ENCODE measurements at regions of chr2 and their contacts with region 1.

Region 1: GRCh38 chr2:237674731-237675276 is 47.4 kb downstream of the LRRFIP1 start:
- DNase-seq: peak; percentile 90
- H3K4me3 ChIP-seq: no peak overlapping the region; a peak in 1 of 4 replicates
- H3K27ac ChIP-seq: peak overlapping the region; percentile 76 to 92
- H3K4me1 ChIP-seq: peaks cover 35 to 51% of the 10 kb centered on the region in 2 experiments
- H3K27me3 ChIP-seq: no peaks in the 10 kb centered on the region
- CTCF ChIP-seq: no peak
- EP300 ChIP-seq: no peak
- RAD21 ChIP-seq: peak; percentile 36; the same call in 1 of the 2 replicates

Region 2: GRCh38 chr2:237529452-237530402 is 145.1 kb before region 1 on chr2:
- CTCF ChIA-PET with region 1: no interaction called
- POLR2A ChIA-PET with region 1: no interaction called
- DNase-seq: no peak
- H3K4me3 ChIP-seq: no peak overlapping the region
- H3K27ac ChIP-seq: no peak overlapping the region
- H3K4me1 ChIP-seq: peaks cover 0 to 8% of the 10 kb centered on the region in 2 experiments; a peak in 1 of 4 replicates
- H3K27me3 ChIP-seq: no peaks in the 10 kb centered on the region
- CTCF ChIP-seq: no peak
- EP300 ChIP-seq: no peak
- RAD21 ChIP-seq: no peak

Region 3: GRCh38 chr2:237581751-237582746 is 92.8 kb before region 1 on chr2:
- CTCF ChIA-PET with region 1: interaction called, 33 read pairs
- POLR2A ChIA-PET with region 1: no interaction called
- DNase-seq: peak; percentile 69
- H3K4me3 ChIP-seq: no peak overlapping the region
- H3K27ac ChIP-seq: peak overlapping the region in 1 of 2 experiments; percentile 77; a peak in 1 of 4 replicates
- H3K4me1 ChIP-seq: peaks cover 0 to 21% of the 10 kb centered on the region in 2 experiments; a peak in 1 of 4 replicates
- H3K27me3 ChIP-seq: no peaks in the 10 kb centered on the region
- CTCF ChIP-seq: peak; percentile 61
- EP300 ChIP-seq: no peak
- RAD21 ChIP-seq: peak; percentile 77

Region 4: DNA sequence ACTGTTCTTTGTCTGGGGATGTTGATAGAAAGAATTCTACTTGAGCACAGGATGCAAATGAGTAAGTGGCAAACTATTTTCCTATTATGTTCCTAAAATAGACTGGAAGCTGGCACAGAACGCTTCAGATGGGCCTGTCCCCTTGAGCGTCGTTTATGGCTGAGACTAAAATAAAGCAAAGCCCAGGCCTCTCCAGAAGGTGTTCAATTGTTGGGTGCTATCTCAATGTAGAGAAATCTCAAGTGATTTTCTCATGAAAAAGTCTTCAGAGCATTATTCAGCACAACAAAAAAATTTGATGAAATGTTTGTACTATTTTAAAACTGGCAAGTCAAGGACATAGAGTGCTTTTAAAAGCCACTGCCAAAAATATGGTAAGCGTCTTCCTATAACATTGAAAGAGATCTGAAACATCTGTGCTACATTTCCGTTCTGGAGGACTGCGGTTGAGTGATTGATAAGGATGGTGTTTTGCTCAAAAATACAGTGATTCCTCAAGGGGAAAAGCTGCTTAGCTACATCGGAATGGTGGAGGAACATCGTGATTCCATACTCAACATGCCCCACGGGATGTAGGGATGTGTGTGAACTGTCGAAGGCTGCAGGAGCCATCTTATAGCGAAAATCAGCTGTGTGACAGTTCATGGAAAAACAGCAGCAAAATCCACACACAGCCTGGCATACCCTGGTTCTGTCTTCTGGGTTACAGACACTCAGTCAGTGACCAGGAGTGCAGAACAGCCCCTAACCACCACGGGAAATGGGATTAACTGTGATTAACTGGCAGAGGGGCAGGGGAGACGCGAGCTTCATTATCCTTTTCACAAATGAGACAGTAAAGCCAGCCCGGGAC is 57.8 kb before region 1 on chr2:
- CTCF ChIA-PET with region 1: no interaction called
- POLR2A ChIA-PET with region 1: no interaction called
- DNase-seq: no peak
- H3K4me3 ChIP-seq: no peak overlapping the region
- H3K27ac ChIP-seq: peak overlapping the region; percentile 84 to 96
- H3K4me1 ChIP-seq: peaks cover 20 to 41% of the 10 kb centered on the region in 2 experiments
- H3K27me3 ChIP-seq: no peaks in the 10 kb centered on the region
- CTCF ChIP-seq: no peak
- EP300 ChIP-seq: peak; percentile 22 to 63; a peak in 3 of 4 replicates
- RAD21 ChIP-seq: no peak

Region 5: DNA sequence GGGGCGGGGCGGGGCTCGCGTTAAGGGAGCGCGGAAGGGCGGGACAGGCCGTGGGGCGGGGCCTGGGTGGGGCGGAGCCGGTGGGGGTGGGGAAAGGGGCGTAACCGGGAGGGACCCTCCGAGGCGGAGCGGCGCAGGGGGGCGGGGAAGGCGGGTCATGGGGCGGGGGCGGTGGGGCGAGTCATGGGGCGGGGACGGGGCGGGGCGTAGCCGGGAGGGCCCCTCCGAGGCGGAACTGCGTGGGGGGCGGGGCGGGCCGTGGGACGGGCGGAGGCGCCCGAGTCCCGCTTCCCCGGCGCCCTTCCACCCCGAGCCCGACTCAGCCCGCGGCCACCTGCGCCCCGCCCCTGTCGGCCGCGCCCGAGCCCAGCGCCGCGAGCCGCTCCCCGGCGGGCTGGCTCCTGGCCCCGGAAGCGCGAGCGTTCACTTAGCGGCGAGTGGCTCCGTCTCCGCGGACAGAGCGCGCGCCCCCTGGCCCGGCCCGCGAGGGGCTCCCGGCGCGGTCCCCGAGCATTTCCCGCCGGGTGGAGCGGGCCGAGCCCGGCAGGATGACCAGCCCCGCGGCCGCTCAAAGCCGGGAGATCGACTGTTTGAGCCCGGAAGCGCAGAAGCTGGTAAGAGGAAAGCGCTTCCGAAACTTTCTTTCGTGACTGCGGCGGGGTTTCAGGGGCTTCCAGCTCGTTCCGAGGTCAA is 17.2 kb after region 1 on chr2:
- CTCF ChIA-PET with region 1: interaction called, 150 read pairs
- POLR2A ChIA-PET with region 1: interaction called, 5 read pairs
- DNase-seq: peak; percentile 99
- H3K4me3 ChIP-seq: peak overlapping the region; percentile 82 to 84
- H3K27ac ChIP-seq: peak overlapping the region; percentile 60 to 88
- H3K4me1 ChIP-seq: peaks cover 50 to 53% of the 10 kb centered on the region in 2 experiments
- H3K27me3 ChIP-seq: no peaks in the 10 kb centered on the region
- CTCF ChIP-seq: no peak
- EP300 ChIP-seq: no peak
- RAD21 ChIP-seq: no peak

Region 6: DNA sequence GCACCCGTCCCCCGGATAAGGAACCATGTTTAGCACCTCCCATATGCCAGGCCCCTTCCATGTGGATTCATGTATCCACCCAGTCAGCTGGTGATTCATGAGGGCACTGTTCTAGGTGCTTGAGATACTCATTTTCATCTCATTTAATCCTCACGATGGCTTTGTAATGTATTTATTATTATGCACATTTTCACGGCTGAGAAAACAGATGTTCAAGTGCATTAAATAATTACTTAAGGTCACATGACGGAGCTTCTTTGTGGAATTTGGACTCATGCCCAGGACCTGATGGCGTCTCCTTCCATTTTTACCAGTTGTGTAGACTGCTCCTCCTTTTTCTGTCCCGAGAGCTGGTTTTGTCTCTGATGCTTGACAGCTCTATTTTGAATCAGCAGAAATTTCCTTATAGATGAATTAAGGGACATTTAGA is 51.6 kb after region 1 on chr2:
- CTCF ChIA-PET with region 1: interaction called, 45 read pairs
- POLR2A ChIA-PET with region 1: no interaction called
- DNase-seq: peak; percentile 65
- H3K4me3 ChIP-seq: no peak overlapping the region
- H3K27ac ChIP-seq: peak overlapping the region; percentile 63 to 65
- H3K4me1 ChIP-seq: peaks cover 41 to 50% of the 10 kb centered on the region in 2 experiments
- H3K27me3 ChIP-seq: no peaks in the 10 kb centered on the region
- CTCF ChIP-seq: no peak
- EP300 ChIP-seq: no peak; a peak in 2 of 4 replicates
- RAD21 ChIP-seq: no peak

Region 7: DNA sequence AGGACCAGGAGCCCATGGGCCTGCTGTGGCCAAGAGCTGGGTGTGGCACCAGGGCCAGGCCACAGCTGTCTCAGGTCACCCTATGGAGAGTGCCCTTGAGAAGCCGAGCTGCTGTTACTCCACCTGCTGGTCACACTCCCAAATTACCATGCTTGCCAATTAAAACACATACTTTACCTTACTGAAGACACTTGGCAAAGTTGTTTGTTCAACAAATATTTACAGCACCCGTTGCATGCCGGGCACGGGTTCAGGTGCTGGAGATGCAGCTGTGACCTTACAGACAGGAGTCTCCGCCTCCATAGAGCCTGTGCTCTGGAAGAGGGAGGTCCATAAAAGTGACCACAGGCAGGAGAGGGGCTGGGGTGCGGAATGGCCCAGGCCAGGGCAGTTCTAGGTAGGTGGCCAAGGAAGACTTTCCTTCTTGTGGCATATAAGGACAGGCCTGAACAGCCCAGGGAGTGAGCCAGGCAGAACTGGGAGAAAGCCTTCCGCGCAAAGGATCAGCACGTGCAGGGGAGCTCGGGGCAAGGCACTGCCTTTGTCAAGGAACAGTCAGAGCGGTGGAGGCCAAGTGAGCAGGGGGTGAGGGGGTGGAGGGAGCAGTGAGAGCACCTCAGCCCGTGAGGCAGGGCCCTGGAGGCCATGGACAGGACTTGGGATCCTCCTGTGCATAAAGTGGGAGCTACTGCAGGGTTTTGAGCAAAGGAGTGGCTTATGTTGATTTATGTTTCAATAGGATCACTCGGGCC is 100.2 kb after region 1 on chr2:
- CTCF ChIA-PET with region 1: interaction called, 46 read pairs
- POLR2A ChIA-PET with region 1: no interaction called
- DNase-seq: peak; percentile 75
- H3K4me3 ChIP-seq: no peak overlapping the region; a peak in 1 of 4 replicates
- H3K27ac ChIP-seq: no peak overlapping the region; a peak in 1 of 4 replicates
- H3K4me1 ChIP-seq: no peaks in the 10 kb centered on the region; a peak in 1 of 4 replicates
- H3K27me3 ChIP-seq: no peaks in the 10 kb centered on the region
- CTCF ChIP-seq: peak; percentile 70
- EP300 ChIP-seq: no peak
- RAD21 ChIP-seq: peak; percentile 67

Region 8: DNA sequence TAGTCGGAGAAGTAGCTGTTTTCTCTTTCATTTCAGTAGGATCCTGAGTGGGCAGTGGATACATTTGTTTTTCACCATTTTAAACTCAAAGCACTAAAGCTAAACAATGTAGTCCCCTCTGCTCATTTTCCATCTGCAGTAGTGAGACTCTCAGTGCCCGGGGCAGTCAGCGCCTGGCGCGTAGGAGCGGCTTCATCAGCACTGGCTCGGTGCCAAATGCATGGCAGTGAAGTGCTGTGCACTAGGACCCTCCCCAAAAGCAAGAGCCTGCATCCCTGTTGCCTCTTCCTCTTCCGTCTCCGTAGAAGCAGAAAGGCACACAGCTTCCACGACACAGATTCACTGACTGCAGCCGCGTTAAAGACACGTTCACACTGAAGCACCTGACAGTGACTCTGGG is 406.3 kb after region 1 on chr2:
- CTCF ChIA-PET with region 1: no interaction called
- POLR2A ChIA-PET with region 1: no interaction called
- DNase-seq: peak; percentile 84
- H3K4me3 ChIP-seq: no peak overlapping the region
- H3K27ac ChIP-seq: peak overlapping the region in 1 of 2 experiments; percentile 67; a peak in 2 of 4 replicates
- H3K4me1 ChIP-seq: peaks cover 0 to 10% of the 10 kb centered on the region in 2 experiments; a peak in 1 of 4 replicates
- H3K27me3 ChIP-seq: no peaks in the 10 kb centered on the region
- CTCF ChIP-seq: no peak
- EP300 ChIP-seq: no peak
- RAD21 ChIP-seq: no peak

Measured in SK-N-SH (cell line).